Mammary epithelial cell (primary cell): ENCODE measurements at regions of chr15 and their contacts with region 1.

Region 1: DNA sequence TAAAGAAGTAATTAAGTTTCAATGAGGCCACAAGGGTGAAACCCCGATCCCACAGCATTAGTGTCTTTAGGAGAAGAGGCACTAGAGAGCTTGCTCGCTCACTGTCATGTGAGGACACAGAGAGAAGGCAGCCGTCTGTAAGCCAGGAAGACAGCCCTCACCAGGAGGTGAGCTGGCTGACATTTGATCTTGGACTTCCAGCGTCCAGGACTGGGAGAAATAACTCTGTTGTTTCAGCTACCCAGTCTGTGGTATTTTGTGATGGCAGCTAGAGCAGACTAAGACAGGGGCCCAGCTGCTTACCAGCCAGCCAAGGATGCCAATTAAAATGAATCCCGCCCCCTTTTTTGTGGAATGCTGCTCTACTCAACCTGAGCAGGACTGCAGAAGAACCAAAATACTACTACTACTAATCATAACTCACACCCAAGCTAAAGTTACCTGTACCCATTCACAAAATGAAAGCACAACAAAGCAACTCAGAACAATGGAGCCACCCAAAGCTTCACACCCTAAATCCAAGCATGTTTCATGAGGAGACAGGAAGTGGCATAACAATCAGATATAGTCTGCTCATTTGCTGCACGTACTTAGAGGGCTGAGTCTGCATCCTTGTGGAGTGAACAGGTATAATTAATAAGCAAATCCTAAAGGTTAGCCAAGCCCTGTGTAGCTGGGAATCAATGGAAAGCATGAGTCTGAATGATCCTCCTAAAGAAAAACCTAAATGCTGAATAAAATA is 35.6 kb upstream of the RHCG start:
- DNase-seq: peak; percentile 70
- H3K4me3 ChIP-seq: no peak overlapping the region
- H3K27ac ChIP-seq: no peak overlapping the region
- H3K4me1 ChIP-seq: peaks cover 7% of the 10 kb centered on the region
- H3K27me3 ChIP-seq: no peaks in the 10 kb centered on the region
- CTCF ChIP-seq: peak in 1 of 2 donors; percentile 18

Region 2: DNA sequence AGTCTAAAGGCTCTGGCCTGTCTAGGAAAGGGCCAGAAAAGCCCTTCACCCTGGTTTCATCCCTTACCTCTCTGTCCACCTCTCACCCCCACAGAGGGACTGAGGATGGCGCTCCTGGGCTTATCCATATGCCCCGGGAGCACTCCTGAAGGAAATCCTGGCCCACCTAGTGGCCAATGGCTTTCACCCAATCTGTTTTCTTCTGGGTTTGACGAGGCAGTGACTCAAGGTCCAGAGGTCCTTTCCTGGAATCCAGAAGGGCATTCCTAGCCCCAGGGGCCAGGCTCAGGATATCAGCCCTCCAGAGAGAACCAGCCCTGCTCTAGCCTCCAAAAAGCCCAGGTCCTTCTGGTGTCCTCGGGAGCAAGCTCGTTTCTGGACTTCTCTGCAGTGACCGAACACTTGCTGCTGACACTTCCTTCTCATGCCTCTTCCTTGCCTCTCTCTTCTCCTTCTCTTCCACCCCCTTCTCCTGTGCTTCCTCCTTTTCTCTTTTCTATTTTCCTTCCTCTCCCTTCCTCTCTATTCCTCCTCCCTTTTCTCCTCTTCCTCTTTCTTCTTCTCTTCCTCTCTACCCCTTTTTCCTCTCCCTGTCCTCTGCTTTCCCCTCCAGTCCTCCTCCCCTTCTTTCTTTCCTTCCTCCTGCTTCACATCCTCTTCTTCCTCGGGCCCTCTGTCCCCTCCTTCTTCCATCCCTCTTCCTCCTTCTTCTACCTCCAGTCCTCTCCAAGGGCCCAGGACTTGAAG is 95.2 kb before region 1 on chr15:
- CTCF ChIA-PET with region 1: no interaction called
- dilution Hi-C with region 1: loop called (anchors 5 kb)
- in situ Hi-C with region 1: no loop called
- intact Hi-C with region 1: no loop called
- DNase-seq: no peak
- H3K4me3 ChIP-seq: no peak overlapping the region
- H3K27ac ChIP-seq: no peak overlapping the region
- H3K4me1 ChIP-seq: no peaks in the 10 kb centered on the region
- H3K27me3 ChIP-seq: peaks cover 6% of the 10 kb centered on the region
- CTCF ChIP-seq: no peak

Region 3: DNA sequence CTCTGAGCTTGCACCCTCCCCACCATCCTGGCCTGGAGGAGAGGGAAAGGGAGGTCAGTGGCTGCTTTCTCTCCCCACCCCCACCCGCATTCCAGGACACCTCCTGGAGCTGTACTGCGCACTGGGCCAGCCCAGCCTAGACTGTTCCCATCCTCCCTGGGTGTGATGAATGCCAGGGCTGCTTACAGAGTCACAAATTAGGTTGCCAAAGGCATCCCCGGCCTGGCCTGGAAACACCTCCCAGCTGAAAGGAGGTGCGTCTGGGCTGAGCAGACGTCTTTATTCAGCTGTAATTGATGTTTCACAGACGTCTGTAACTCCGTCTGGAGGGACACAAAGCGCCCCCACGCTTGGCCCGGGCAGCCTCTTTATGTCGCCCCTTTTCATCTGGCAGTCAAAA is 83.1 kb before region 1 on chr15:
- CTCF ChIA-PET with region 1: no interaction called
- dilution Hi-C with region 1: no loop called
- in situ Hi-C with region 1: no loop called
- intact Hi-C with region 1: no loop called
- DNase-seq: no peak
- H3K4me3 ChIP-seq: no peak overlapping the region
- H3K27ac ChIP-seq: no peak overlapping the region
- H3K4me1 ChIP-seq: no peaks in the 10 kb centered on the region
- H3K27me3 ChIP-seq: peaks cover 2% of the 10 kb centered on the region
- CTCF ChIP-seq: no peak